CD8-positive, alpha-beta memory T cell (primary cell): ENCODE measurements at regions of chr11 and their contacts with region 1.

Region 1: GRCh38 chr11:128695539-128696221 is 1.8 kb downstream of the FLI1 start:
- DNase-seq: peak in 3 of 5 donors; percentile 58 to 62 (median 61)
- H3K4me3 ChIP-seq: peak overlapping the region; percentile 67
- H3K4me3 Mint-ChIP-seq: peak overlapping the region; percentile 96 to 99 (median 96)
- H3K27ac ChIP-seq: peak overlapping the region; percentile 82
- H3K27ac Mint-ChIP-seq: peak overlapping the region; percentile 89 to 97 (median 94)
- H3K4me1 ChIP-seq: peaks cover 54% of the 10 kb centered on the region
- H3K4me1 Mint-ChIP-seq: peaks cover 59 to 73% (median 63%) of the 10 kb centered on the region in 3 donors
- H3K27me3 ChIP-seq: no peaks in the 10 kb centered on the region
- H3K27me3 Mint-ChIP-seq: peaks cover 0 to 16% of the 10 kb centered on the region in 2 donors

Region 2: GRCh38 chr11:128725630-128726319 is 30.1 kb after region 1 on chr11:
- CTCF ChIA-PET with region 1: interaction called, 3 read pairs
- POLR2A ChIA-PET with region 1: interaction called, 15 read pairs
- DNase-seq: peak; percentile 33 to 88 (median 78)
- H3K4me3 ChIP-seq: peak overlapping the region; percentile 59
- H3K4me3 Mint-ChIP-seq: peak overlapping the region; percentile 80 to 89 (median 87)
- H3K27ac ChIP-seq: no peak overlapping the region
- H3K27ac Mint-ChIP-seq: peak overlapping the region; percentile 90 to 95 (median 92)
- H3K4me1 ChIP-seq: peaks cover 99% of the 10 kb centered on the region
- H3K4me1 Mint-ChIP-seq: peaks cover 98 to 100% (median 100%) of the 10 kb centered on the region in 3 donors
- H3K27me3 ChIP-seq: no peaks in the 10 kb centered on the region
- H3K27me3 Mint-ChIP-seq: peaks cover 0 to 11% of the 10 kb centered on the region in 2 donors

Region 3: DNA sequence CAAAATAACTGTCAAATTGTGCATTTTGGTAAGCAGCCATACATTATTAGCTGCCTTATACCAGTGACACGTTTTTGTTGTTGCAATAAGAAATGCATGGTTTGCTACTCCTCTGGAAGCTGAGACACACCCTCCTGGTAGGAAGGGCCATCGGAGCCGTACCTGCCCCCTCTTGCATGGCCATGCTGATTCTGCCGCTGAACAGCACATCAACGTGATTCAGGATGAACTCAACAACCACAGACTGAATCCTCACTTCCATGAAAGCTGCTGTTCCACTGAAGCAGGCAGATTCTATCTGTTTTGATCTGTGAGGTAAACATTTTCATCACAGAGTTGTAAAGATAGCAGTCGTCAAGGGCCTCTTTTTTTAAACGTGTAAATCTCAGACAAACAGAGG is 285.6 kb after region 1 on chr11:
- CTCF ChIA-PET with region 1: no interaction called
- POLR2A ChIA-PET with region 1: no interaction called
- DNase-seq: no peak
- H3K4me3 ChIP-seq: no peak overlapping the region
- H3K4me3 Mint-ChIP-seq: no peak overlapping the region
- H3K27ac ChIP-seq: no peak overlapping the region
- H3K27ac Mint-ChIP-seq: no peak overlapping the region
- H3K4me1 ChIP-seq: no peaks in the 10 kb centered on the region
- H3K4me1 Mint-ChIP-seq: peaks cover 0 to 5% (median 3%) of the 10 kb centered on the region in 3 donors
- H3K27me3 ChIP-seq: no peaks in the 10 kb centered on the region
- H3K27me3 Mint-ChIP-seq: peaks cover 0 to 13% of the 10 kb centered on the region in 2 donors